ENCODE measurements at regions of chr10 and their contacts with region 1.

Region 1: DNA sequence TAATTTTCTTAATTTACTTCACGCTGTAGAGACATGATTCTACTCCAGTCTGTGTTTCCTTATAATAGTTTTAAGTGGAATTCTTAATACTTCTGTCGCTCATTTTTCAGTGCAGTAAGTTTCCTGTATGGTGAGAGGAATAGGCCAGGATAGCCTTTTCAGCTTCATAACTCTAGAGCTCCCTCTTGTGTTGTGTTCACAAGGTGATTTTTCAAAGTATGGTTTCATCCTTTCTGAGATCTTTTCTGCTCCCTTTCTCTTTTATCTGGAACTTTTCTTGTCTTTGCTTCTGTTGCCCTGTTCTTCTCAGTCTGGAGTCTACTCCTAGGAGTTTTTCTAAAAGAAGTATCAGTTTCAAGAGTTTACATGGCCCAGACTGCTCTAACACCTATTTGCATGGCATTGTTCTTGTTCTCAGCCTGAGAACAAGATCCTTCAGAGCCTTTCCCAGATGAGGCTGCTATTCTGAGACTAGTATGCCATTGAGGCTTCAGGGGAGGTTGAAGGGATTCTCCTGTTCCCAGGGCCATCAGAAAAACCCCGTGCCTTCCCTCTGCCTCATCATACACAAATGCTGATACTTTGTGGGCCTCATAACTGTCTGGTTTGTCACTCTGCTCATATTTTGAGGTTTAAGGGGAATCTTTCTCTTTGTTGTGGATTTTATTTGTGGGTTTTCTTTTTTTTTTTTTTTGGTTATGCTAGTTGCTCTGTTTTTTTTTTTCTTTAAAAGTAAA is 21.8 kb downstream of the NET1 start:
- DNase-seq: peak; percentile 27 to 60 (median 32)
- ATAC-seq: peak; percentile 92
- H3K4me3 ChIP-seq: no peak overlapping the region
- H3K27ac ChIP-seq: peak overlapping the region; percentile 31; the same call in 1 of the 3 replicates
- H3K4me1 ChIP-seq: peaks cover 0 to 7% of the 10 kb centered on the region in 2 experiments; a peak in 2 of 5 replicates
- H3K27me3 ChIP-seq: no peaks in the 10 kb centered on the region
- CTCF ChIP-seq: peak; percentile 51 to 78 (median 69); a peak in 5 of 6 replicates
- EP300 ChIP-seq: no peak
- POLR2A ChIP-seq: no peak
- RAD21 ChIP-seq: peak; percentile 65 to 86

Region 2: GRCh38 chr10:4819707-4820106 is 614.5 kb before region 1 on chr10:
- CTCF ChIA-PET with region 1: interaction called, 39 read pairs
- POLR2A ChIA-PET with region 1: no interaction called
- in situ Hi-C with region 1: no loop called
- intact Hi-C with region 1: loop called (anchors 5 kb)
- DNase-seq: peak in 2 of 4 experiments; percentile 38 to 67
- ATAC-seq: peak; percentile 66
- H3K4me3 ChIP-seq: no peak overlapping the region
- H3K27ac ChIP-seq: no peak overlapping the region; the same call in 2 of the 3 replicates
- H3K4me1 ChIP-seq: peaks cover 0 to 32% of the 10 kb centered on the region in 2 experiments; a peak in 2 of 5 replicates
- H3K27me3 ChIP-seq: no peaks in the 10 kb centered on the region
- CTCF ChIP-seq: no peak
- EP300 ChIP-seq: peak; percentile 50
- POLR2A ChIP-seq: no peak
- RAD21 ChIP-seq: no peak; a peak in 1 of 4 replicates

Region 3: DNA sequence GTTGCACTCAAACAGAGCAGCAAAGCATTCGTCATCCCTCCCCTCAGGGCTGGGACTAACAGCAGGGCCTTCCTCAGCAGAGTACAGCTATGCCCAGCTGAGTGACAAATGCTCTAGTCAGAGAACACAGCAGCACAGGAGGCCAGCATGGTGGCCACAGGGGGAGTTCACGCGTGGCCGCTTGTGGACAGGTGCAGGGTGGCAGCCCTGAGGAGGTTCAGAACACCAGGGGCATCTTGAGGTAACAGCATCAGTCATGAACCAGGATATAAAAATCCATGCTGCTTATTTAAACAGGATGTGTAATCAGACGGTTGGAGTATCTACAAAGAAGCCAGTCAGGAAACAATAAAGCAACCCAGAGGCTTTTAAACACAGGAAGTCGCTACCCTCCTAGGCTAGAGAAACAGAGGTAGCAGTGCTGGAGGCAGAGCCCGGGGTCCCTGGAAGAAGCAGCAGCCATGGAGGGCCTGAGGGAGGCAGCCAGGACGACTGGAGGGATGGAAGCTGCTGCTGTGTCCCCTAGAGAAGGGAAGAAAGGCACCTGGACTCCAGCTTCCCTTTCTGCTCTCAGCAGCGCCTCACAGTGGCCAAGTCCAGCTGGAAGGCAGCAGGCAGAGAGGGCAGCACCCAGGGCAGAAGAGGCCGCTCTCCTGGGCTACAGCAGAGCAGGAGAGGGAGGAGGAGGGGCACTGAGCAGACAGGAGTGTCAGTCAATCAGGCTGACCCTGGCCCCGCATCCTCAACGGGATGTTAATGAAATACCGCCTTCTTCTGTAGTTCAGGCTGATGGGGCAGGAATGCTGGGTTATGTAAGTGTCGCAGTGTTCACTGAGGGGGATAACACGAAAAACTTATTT is 140.3 kb before region 1 on chr10:
- CTCF ChIA-PET with region 1: no interaction called
- POLR2A ChIA-PET with region 1: no interaction called
- in situ Hi-C with region 1: no loop called
- intact Hi-C with region 1: loop called (anchors 10 kb)
- DNase-seq: peak; percentile 15 to 55 (median 31)
- ATAC-seq: peak; percentile 84
- H3K4me3 ChIP-seq: no peak overlapping the region
- H3K27ac ChIP-seq: no peak overlapping the region
- H3K4me1 ChIP-seq: peaks cover 5 to 32% of the 10 kb centered on the region in 2 experiments; a peak in 4 of 5 replicates
- H3K27me3 ChIP-seq: no peaks in the 10 kb centered on the region
- CTCF ChIP-seq: peak; percentile 61 to 75 (median 62); a peak in 5 of 6 replicates
- EP300 ChIP-seq: no peak
- POLR2A ChIP-seq: no peak
- RAD21 ChIP-seq: peak in 1 of 2 experiments; percentile 41; a peak in 3 of 4 replicates

Region 4: GRCh38 chr10:5365928-5366327 is 68.3 kb before region 1 on chr10:
- CTCF ChIA-PET with region 1: no interaction called
- POLR2A ChIA-PET with region 1: no interaction called
- in situ Hi-C with region 1: no loop called
- intact Hi-C with region 1: no loop called
- DNase-seq: peak in 1 of 4 experiments; percentile 25
- ATAC-seq: 0 out of 3 replicates have a peak, but pooled peaks have one; percentile 34
- H3K4me3 ChIP-seq: no peak overlapping the region
- H3K27ac ChIP-seq: no peak overlapping the region
- H3K4me1 ChIP-seq: peaks cover 3 to 8% of the 10 kb centered on the region in 2 experiments; a peak in 4 of 5 replicates
- H3K27me3 ChIP-seq: peaks cover 0 to 5% of the 10 kb centered on the region in 2 experiments; a peak in 2 of 5 replicates
- CTCF ChIP-seq: no peak
- EP300 ChIP-seq: no peak
- POLR2A ChIP-seq: no peak
- RAD21 ChIP-seq: no peak

Region 5: GRCh38 chr10:5385224-5385623 is 49.0 kb before region 1 on chr10:
- CTCF ChIA-PET with region 1: no interaction called
- POLR2A ChIA-PET with region 1: no interaction called
- in situ Hi-C with region 1: no loop called
- intact Hi-C with region 1: loop called (anchors 5 kb)
- DNase-seq: no peak
- ATAC-seq: no peak
- H3K4me3 ChIP-seq: no peak overlapping the region
- H3K27ac ChIP-seq: no peak overlapping the region
- H3K4me1 ChIP-seq: no peaks in the 10 kb centered on the region; a peak in 2 of 5 replicates
- H3K27me3 ChIP-seq: no peaks in the 10 kb centered on the region
- CTCF ChIP-seq: no peak
- EP300 ChIP-seq: no peak
- POLR2A ChIP-seq: no peak
- RAD21 ChIP-seq: no peak

Region 6: DNA sequence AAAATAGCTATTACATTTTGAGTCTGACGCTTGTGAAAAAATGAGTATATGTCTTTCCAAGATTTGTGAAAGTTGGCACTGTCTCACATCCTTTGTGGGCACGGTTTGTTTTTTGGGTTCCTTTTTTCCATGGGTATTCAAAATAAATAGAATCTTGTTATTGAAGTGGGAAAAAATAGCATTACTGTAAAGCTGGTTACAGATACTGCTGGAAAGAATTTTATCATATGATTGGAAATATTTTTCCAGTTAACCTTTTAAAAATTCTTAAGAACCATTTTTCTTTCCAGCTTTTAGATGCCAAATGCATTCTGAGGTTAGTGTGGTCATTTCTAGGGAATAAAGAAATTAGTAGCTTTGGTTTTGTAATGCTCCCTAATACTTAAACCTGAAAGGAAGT is 10.4 kb before region 1 on chr10:
- CTCF ChIA-PET with region 1: no interaction called
- POLR2A ChIA-PET with region 1: interaction called, 11 read pairs
- in situ Hi-C with region 1: no loop called
- intact Hi-C with region 1: no loop called
- DNase-seq: no peak
- ATAC-seq: no peak
- H3K4me3 ChIP-seq: no peak overlapping the region
- H3K27ac ChIP-seq: no peak overlapping the region
- H3K4me1 ChIP-seq: no peaks in the 10 kb centered on the region
- H3K27me3 ChIP-seq: no peaks in the 10 kb centered on the region
- CTCF ChIP-seq: no peak
- EP300 ChIP-seq: no peak
- POLR2A ChIP-seq: no peak
- RAD21 ChIP-seq: no peak

Region 7: GRCh38 chr10:5453749-5454489 is 19.7 kb after region 1 on chr10:
- CTCF ChIA-PET with region 1: no interaction called
- POLR2A ChIA-PET with region 1: no interaction called
- in situ Hi-C with region 1: no loop called
- intact Hi-C with region 1: no loop called
- DNase-seq: no peak
- ATAC-seq: no peak
- H3K4me3 ChIP-seq: no peak overlapping the region
- H3K27ac ChIP-seq: 0 out of 3 replicates have a peak overlapping the region, but pooled peaks have one; percentile 10
- H3K4me1 ChIP-seq: peaks cover 3 to 12% of the 10 kb centered on the region in 2 experiments
- H3K27me3 ChIP-seq: no peaks in the 10 kb centered on the region
- CTCF ChIP-seq: no peak
- EP300 ChIP-seq: no peak
- POLR2A ChIP-seq: no peak
- RAD21 ChIP-seq: no peak

Measured in K562 (cell line).